Dorsolateral prefrontal cortex (tissue), 120 donors: ENCODE measurements at regions of chr1 and their contacts with region 1.

Region 1: DNA sequence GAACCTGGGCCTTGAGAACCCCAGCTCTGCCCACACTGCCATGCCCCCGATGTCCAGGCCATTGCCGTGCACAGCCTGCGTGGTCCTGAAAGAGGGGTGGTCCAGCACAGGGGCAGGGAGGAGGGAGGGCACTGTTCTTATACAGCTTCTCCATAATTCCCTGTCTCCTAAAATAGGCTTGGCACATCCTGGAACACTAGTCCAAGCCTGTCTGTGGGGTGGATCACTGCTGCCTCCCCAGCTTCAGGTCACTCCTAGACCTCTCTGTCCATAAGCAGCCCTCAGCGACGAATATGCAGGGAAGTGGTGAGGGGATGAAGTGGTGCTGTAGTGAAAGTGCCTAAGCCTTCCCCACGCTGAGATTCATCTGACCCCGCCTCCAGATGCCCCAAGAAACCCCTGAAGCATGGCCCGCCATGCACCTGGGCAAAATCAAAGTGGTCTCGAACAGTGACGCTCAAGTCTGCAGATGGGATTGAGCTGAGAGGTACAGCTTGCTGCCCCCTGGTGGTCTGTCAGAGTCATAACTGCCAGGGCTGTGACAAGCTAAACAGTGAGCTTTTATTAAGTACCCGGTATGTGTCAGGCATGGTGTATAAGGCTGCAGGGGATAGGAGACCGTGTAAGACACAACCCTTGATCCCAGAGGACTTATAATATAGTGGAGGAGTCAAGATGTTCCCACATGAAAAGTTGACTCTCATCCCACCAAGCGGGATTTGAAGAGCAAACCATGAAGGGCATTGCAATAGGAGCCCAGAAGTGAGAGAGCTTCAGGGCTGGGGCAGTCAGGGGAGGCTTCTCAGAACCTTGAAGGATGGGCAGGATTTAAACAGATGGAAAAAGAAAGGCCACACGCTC is 66.6 kb downstream of the FAM163A start:
- DNase-seq: peak in 8 of 10 donors; percentile 50 to 77 (median 61)
- H3K4me3 ChIP-seq: peak overlapping the region in 7 of 59 donors; percentile 12 to 38 (median 24)
- H3K27ac ChIP-seq: no peak overlapping the region
- H3K27me3 ChIP-seq: no peaks in the 10 kb centered on the region
- CTCF ChIP-seq: peak; percentile 74 to 97 (median 92)

Region 2: DNA sequence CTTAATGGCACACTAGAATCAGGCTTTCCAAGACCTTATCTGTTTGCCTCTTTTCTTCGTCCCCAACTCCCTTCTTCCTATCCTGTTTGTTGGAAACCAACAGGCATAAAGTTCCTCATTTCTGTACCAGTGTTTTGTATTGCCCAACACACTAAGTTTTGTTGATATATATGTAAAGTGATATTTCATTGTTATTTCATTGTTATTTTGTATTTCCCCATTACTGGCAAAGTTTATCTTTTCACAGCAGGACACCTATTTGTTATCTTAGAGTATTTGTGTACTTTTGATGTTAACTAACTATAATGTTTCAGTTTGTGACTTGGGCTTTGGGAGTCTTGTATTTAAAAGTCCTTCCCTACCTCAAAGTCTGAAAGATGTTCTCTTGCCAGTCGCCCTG is 757.0 kb before region 1 on chr1:
- intact Hi-C with region 1: no loop called
- DNase-seq: no peak
- H3K4me3 ChIP-seq: no peak overlapping the region
- H3K27ac ChIP-seq: peak overlapping the region in 13 of 59 donors; percentile 14 to 74 (median 54)
- H3K27me3 ChIP-seq: no peaks in the 10 kb centered on the region
- CTCF ChIP-seq: no peak

Region 3: DNA sequence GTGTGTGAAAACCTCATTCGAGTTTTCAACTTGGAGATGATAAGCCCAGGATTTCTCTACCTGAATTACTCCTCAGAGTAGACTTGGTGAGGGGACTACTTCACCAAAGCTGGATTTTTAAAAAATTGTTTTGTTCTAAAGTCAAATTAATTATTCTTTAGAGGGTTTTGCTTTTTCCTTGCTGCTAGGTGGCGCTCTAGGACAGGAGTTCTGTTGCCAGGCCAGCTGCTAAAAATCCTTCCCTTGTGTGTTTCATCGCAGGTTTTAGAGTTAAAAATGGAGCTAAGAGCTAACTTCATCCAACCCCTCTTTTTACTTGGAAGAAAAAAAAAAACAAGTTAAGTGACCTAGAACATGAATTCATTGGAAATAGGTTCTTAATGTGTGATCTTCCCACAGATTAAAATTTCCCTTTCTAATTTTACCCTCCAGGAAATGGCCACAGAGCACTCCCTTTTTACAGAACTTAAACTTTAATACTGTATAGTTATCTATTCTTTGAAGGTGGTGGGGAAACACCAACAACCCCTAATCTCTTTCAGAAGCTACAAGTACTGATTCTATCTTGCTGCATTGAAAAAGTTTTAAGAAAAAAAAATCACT is 103.3 kb before region 1 on chr1:
- intact Hi-C with region 1: loop called (anchors 2 kb)
- DNase-seq: peak in 5 of 10 donors; percentile 17 to 58 (median 35)
- H3K4me3 ChIP-seq: no peak overlapping the region
- H3K27ac ChIP-seq: no peak overlapping the region
- H3K27me3 ChIP-seq: no peaks in the 10 kb centered on the region
- CTCF ChIP-seq: peak; percentile 38 to 91 (median 76)